PC-3 (cell line): ENCODE measurements at regions of chr2 and their contacts with region 1.

Region 1: DNA sequence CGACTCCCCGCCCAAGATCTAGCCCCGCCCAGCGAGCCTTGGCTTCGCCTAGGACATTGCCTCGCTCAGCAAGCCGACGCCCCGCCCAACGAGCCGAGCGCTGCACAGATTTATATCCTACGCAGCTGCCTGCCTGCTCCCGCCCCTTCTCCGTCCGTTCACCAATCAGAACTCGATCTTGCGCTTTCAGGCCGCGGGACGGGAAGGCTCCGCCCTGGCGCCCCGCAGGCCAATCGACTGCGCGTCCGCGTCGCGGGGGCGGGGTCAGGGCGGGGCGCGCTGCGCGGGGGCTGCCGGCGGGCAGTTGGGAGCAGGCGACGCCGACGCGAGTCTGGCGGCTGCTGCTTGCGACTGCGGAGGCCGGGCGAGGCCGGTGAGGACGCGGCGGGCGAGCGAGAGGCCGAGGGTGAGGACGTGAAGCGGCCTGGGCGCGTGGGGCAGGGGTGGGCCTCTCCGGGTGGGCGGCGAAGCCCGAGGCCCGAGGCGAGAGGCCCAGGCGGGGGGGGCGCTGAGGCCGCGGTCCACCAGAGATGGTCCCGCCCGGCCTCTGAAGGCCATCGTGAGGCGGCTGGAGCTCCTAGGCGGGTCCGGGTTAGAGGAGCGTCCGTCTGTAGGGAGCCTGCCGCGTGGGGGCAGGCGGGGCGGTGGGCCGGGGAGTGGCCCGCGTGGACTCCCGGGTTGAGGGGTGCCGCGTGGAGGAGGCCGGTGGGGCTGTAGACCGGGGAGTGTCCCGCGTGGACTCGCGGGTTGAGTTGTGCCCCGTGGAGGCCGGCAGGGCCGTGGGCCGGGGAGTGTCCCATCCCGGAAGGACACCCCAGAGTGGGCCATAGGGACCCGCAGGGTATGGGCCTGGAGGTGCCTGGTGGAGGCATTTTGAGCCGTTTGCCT is at the start of gene FARP2:
- DNase-seq: peak; percentile 95
- ATAC-seq: peak; percentile 84
- H3K4me3 ChIP-seq: peak within 1 kb of the TSS; percentile 98
- H3K27ac ChIP-seq: peak within 1 kb of the TSS; percentile 5; the same call in 1 of the 2 replicates
- H3K4me1 ChIP-seq: peaks cover 18% of the 10 kb centered on the region
- H3K27me3 ChIP-seq: no peaks in the 10 kb centered on the region
- CTCF ChIP-seq: no peak
- total RNA-seq, gene FARP2: 24.5 and 29.9 TPM in 2 replicates

Region 2: DNA sequence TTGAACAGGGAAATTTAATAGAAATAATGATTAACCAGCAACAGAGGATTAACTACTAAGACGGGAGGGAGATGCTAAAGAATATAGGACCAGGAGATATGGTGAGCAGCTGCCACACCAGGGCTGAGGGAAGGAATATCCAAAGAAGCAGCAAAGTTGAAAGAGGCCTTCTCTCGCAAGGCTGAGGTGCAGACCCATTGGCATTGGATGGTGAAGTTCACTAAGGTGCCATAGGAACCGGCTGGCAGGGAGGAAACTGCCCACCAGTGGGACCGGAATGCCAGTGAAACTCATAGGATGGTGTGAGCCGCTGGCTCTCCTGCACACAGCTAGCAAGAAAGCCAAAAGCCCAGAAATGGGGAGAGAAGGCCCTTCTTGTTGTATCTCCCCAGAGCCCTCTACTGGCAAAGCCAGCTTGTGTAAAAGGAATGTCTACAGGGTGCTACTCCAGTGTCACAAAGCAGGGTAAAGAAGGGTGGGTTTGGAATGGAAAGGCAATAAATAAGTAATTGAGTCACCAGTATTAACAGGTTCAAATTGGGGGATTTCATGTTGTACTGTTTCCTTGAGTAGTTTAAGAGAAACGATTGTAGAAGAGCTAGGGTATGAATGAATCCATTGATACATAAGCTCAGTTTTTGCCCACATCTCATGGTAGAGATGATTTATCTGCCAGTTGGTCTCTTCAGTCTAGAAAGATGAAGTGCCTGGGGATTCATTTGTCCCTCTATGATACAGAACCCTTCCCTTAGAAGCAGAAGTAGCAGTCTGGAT is 35.9 kb after region 1 on chr2:
- CTCF ChIA-PET with region 1: no interaction called
- POLR2A ChIA-PET with region 1: no interaction called
- intact Hi-C with region 1: loop called (anchors 2 kb)
- DNase-seq: peak; percentile 29
- ATAC-seq: peak; percentile 82
- H3K4me3 ChIP-seq: no peak overlapping the region
- H3K27ac ChIP-seq: no peak overlapping the region
- H3K4me1 ChIP-seq: no peaks in the 10 kb centered on the region
- H3K27me3 ChIP-seq: no peaks in the 10 kb centered on the region
- CTCF ChIP-seq: peak; percentile 49

Region 3: DNA sequence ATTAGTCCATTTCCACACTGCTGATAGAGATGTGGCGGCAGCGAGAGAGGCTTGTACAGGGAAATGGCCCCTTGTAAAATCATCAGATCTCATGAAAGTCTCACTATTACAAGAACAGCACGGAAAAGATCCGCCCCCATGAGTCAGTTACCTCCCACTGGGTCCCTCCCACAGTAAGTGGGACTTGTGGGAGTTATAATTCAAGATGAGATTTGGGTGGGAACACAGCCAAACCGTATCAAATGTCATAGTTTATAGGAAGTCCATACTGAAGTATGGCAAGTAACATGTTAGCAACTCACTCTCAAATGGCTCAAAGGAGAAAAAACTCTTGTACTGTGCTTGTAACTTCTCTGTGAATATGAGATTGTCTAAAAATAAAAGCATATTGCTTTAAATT is 55.9 kb after region 1 on chr2:
- CTCF ChIA-PET with region 1: no interaction called
- POLR2A ChIA-PET with region 1: no interaction called
- intact Hi-C with region 1: loop called (anchors 2 kb)
- DNase-seq: peak; percentile 93
- ATAC-seq: peak; percentile 78
- H3K4me3 ChIP-seq: no peak overlapping the region
- H3K27ac ChIP-seq: peak overlapping the region; percentile 94
- H3K4me1 ChIP-seq: peaks cover 29% of the 10 kb centered on the region
- H3K27me3 ChIP-seq: no peaks in the 10 kb centered on the region
- CTCF ChIP-seq: no peak

Region 4: GRCh38 chr2:241443486-241444223 is 87.4 kb after region 1 on chr2:
- CTCF ChIA-PET with region 1: no interaction called
- POLR2A ChIA-PET with region 1: no interaction called
- intact Hi-C with region 1: no loop called
- DNase-seq: peak; percentile 62
- ATAC-seq: no peak
- H3K4me3 ChIP-seq: no peak overlapping the region
- H3K27ac ChIP-seq: no peak overlapping the region
- H3K4me1 ChIP-seq: no peaks in the 10 kb centered on the region; the same call in 1 of the 2 replicates
- H3K27me3 ChIP-seq: no peaks in the 10 kb centered on the region
- CTCF ChIP-seq: no peak

Region 5: DNA sequence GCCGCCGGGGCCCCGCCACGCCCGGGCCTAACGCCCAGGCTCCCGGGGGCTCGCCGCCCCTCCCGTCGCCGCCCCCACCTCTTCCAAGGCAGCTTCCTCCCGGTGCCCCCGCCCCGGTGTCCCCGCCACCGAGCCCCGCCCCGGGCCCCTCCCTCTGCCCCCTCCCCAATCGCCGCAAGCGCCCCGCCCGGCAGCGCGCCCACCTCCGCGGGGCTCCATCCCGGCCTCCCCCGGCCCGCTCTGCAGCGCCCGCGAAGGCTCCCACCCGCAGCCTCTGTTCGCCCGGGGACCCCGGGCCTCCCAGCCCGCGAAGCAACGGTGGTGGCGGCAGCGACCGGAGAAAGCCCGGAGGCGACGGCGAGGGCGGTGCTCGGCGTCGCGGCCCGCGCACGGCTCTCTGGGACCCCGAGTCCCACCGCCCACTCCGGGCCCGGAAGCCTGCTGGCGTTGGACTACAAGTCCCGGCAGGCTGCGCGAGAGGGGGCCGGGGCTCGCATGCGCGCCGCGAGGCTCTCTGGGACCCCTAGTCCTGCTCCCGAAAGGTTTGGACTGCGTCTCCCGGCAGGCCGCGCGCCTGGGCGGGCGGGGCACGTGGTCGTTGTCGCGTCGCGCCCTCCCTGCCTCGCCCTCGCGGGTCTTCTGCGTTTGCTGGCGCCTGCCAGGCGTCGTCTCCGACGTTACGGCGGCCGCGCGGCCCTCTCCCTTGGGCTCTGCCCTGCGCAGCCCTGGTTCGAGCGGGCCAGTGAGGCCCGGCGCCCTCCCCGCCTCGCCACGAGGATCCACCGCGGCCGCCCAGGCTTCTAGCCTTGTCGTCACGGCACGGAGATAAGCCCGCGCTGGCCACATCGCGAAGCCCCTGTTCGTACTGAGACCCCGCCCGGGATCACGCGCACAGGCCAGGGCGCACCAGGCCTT is 152.3 kb after region 1 on chr2 and contains the start of gene STK25:
- CTCF ChIA-PET with region 1: no interaction called
- POLR2A ChIA-PET with region 1: no interaction called
- intact Hi-C with region 1: loop called (anchors 5 kb)
- DNase-seq: peak; percentile 97
- ATAC-seq: peak; percentile 94
- H3K4me3 ChIP-seq: peak within 1 kb of the TSS; percentile 90
- H3K27ac ChIP-seq: peak within 1 kb of the TSS; percentile 6; the same call in 1 of the 2 replicates
- H3K4me1 ChIP-seq: peaks cover 17% of the 10 kb centered on the region
- H3K27me3 ChIP-seq: no peaks in the 10 kb centered on the region
- CTCF ChIP-seq: no peak
- total RNA-seq, gene STK25: 198 and 245 TPM in 2 replicates